Activated CD8-positive, alpha-beta T cell treated with anti-CD3 and anti-CD28 coated beads for 36 hours (primary cell): ENCODE measurements at regions of chr1 and their contacts with region 1.

Region 1: DNA sequence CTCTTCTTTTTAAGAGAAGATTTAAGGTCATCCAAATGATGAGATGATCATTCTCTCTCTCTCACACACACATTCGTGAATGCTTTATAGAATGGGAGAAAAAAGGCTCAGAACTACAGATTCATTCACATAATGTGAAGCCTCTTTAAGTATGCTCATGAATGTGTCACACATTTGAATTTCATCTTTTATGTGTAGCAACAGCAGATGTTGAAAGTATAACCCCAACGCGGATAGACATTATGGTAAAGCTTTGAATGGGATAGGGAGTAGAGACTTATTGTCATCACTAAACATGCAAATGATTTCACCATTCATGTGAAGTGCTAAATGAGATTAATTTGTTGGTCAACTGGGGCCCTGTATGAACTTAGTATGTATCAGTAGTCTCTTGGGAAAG is 15.7 kb upstream of the PKN2 start:
- DNase-seq: no peak
- ATAC-seq: no peak
- H3K4me3 Mint-ChIP-seq: no peak overlapping the region
- H3K27ac Mint-ChIP-seq: no peak overlapping the region
- H3K4me1 Mint-ChIP-seq: no peaks in the 10 kb centered on the region
- H3K27me3 Mint-ChIP-seq: peaks cover 4% of the 10 kb centered on the region
- CTCF ChIP-seq: no peak

Region 2: DNA sequence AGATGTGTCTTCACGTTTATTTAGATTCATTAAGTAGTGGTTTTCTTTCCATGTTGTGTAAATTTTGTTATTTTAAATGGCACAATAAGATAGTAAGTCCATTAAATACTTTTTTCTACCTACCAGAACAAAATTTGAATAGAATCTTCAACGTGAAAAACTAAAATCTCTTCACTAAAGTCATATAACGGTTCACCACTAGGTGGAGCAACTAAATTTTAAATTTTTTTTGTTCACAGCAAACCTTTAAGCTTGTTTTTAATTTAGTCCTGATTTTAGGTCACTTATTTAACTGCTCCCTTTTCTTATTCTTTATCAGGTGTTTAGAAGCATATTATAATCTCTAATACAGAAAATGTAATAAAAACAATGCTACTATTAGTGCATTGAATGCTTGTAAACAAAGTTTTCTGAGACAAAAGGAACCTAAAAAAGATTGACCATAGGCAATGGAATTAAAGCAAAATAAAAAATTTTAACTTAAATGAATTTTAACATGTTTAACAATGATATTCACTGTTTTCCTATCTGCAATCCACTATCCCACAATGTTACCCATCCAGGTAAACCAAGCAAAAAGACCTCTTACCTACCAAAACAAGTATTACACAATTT is 12.6 kb before region 1 on chr1:
- CTCF ChIA-PET with region 1: interaction called, 13 read pairs
- POLR2A ChIA-PET with region 1: no interaction called
- intact Hi-C with region 1: no loop called
- DNase-seq: no peak
- ATAC-seq: no peak
- H3K4me3 Mint-ChIP-seq: no peak overlapping the region
- H3K27ac Mint-ChIP-seq: no peak overlapping the region
- H3K4me1 Mint-ChIP-seq: peaks cover 10% of the 10 kb centered on the region
- H3K27me3 Mint-ChIP-seq: no peaks in the 10 kb centered on the region
- CTCF ChIP-seq: peak; percentile 80